Heart right ventricle (tissue), 16 donors: ENCODE measurements at regions of chr18 and their contacts with region 1.

Region 1: GRCh38 chr18:8860845-8861642 is 155.7 kb downstream of the MTCL1 start:
- DNase-seq: no peak
- ATAC-seq: no peak
- H3K4me3 ChIP-seq: no peak overlapping the region
- H3K27ac ChIP-seq: no peak overlapping the region
- H3K4me1 ChIP-seq: no peaks in the 10 kb centered on the region
- H3K27me3 ChIP-seq: no peaks in the 10 kb centered on the region
- CTCF ChIP-seq: no peak

Region 2: DNA sequence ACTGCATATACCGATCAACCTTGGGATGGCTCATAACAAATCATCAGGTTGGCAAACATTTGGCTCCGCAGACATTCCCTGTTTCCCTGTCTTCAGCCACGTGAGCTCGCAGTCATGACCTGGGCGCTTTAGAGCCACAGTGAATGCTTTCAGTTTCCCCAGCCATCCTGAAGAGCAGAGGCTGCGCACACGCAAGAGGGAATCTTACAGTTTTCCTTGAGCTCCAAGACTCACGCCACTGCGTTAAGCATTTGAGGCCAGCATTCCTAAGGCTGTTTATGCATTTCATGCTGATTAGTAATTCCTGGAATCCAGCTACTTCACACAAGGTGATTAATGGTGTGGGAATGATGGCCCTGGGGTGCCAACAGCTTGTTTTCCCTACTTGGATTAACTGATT is 60.6 kb before region 1 on chr18:
- intact Hi-C with region 1: loop called in 1 of 10 experiments (anchors 10 kb)
- DNase-seq: no peak
- ATAC-seq: peak in 1 of 8 donors; percentile 20
- H3K4me3 ChIP-seq: no peak overlapping the region
- H3K27ac ChIP-seq: no peak overlapping the region
- H3K4me1 ChIP-seq: peaks cover 0 to 14% (median 0%) of the 10 kb centered on the region in 9 donors
- H3K27me3 ChIP-seq: no peaks in the 10 kb centered on the region
- CTCF ChIP-seq: no peak